IMR-90 (cell line): ENCODE measurements at regions of chr19 and their contacts with region 1.

Region 1: GRCh38 chr19:46913852-46914430 is 53.1 kb downstream of the ARHGAP35 start:
- DNase-seq: peak; percentile 49
- ATAC-seq: peak; percentile 42
- H3K4me3 ChIP-seq: no peak overlapping the region; the same call in 1 of the 2 replicates
- H3K27ac ChIP-seq: no peak overlapping the region
- H3K4me1 ChIP-seq: peaks cover 12% of the 10 kb centered on the region
- H3K27me3 ChIP-seq: no peaks in the 10 kb centered on the region
- CTCF ChIP-seq: no peak
- POLR2A ChIP-seq: no peak
- RAD21 ChIP-seq: no peak

Region 2: DNA sequence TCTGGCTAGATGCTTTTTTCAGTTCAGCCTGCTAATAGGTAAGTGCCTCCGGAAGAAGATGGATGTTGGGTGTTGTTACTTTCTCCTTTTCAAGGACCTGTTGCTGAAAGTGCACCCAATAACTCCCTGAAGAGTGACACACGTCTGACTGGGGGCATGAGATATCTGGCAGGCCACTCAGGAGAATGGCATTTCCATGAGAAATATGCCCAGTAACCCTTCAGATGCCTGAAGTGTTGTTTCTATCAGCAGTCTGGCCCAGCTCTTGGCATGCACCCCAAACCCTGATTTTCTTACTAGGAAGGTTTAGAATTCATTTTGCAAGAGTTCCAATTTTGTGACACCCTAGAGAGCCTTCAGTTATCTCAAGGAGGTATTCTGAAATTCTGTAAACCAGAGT is 18.4 kb after region 1 on chr19:
- CTCF ChIA-PET with region 1: no interaction called
- POLR2A ChIA-PET with region 1: no interaction called
- dilution Hi-C with region 1: no loop called
- in situ Hi-C with region 1: no loop called
- intact Hi-C with region 1: no loop called
- DNase-seq: peak; percentile 62
- ATAC-seq: peak; percentile 36; the same call in 1 of the 2 replicates
- H3K4me3 ChIP-seq: no peak overlapping the region
- H3K27ac ChIP-seq: no peak overlapping the region
- H3K4me1 ChIP-seq: peaks cover 21% of the 10 kb centered on the region
- H3K27me3 ChIP-seq: no peaks in the 10 kb centered on the region
- CTCF ChIP-seq: no peak
- POLR2A ChIP-seq: no peak
- RAD21 ChIP-seq: no peak

Region 3: DNA sequence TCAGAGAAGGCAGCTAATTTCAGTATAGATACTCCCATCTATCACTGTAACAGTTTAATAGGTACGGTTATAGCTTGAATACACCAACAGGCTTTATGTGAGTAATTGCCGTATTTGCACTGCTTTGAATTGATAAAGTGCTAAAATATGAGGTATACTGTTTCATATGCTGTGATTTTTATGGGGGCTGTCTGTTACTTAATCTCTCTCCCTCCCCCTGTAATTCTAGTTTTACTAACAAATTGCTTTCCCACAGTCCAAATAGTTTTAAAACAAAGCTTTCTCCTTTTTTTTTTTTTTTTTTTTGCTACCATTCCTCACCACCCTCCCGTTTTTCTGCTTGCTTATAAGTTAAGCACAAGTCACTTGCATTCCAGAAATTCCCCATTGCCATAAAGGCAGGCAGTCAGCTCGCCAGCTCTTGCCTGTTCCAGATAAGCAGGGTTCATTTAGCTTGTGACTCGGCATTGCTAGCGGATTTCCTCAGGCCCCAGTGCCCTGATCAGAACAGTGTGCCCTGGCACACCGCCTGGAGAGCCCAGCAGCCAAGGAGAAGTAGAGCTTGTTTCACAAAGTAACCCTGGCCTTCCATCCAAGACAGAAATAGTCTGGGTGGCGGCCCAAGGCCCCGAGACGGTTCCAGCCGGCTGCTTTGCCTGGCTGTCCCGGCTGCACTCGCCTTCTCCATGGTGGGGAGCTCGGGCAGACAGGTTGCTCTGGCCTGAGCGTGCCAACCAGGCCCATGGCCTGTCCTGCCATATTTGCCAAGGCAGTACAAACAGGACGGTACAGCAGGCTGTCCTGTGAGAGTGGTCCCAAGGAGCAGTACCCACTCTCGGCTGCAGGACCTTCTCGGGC is 62.2 kb after region 1 on chr19:
- CTCF ChIA-PET with region 1: no interaction called
- POLR2A ChIA-PET with region 1: no interaction called
- dilution Hi-C with region 1: no loop called
- in situ Hi-C with region 1: no loop called
- intact Hi-C with region 1: loop called (anchors 5 kb)
- DNase-seq: peak; percentile 93
- ATAC-seq: peak; percentile 83
- H3K4me3 ChIP-seq: no peak overlapping the region
- H3K27ac ChIP-seq: peak overlapping the region; percentile 79
- H3K4me1 ChIP-seq: peaks cover 32% of the 10 kb centered on the region
- H3K27me3 ChIP-seq: no peaks in the 10 kb centered on the region
- CTCF ChIP-seq: no peak
- POLR2A ChIP-seq: 0 out of 2 replicates have a peak, but pooled peaks have one; percentile 19
- RAD21 ChIP-seq: 0 out of 2 replicates have a peak, but pooled peaks have one; percentile 14